PC-3 (cell line): ENCODE measurements at regions of chr2 and their contacts with region 1.

Region 1: DNA sequence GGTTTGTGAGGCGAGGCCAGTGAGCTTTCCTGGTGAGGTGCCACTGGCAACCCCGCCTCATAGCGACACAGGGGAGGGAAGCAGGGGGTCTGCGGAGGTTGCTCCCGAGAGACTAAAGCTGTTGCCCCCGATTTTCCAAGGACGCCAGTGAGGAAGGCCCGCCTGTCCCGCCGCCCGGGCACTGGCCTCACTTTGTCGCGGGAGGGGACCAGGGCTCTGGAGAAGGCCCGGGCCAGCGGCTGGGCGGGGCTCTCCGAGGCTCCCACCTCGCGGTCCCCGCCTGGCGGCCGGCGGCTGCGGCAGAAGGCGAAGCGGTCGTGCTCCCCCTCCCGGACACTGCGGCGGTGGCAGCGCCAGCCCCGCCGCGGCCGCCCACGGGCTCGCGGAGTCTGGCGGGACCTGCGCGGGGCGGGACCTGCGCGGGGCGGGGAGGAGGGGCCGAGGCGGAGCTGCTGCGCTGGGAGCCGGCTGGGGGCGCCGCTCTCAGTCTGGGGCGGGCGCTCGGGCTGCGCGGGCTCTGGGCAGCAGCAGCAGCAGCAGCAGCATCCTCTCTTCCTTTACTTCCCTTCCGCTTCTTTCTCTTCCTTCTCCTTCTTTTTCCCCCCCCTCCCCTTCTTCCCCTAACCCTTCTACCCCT is at the start of gene MAP2:
- DNase-seq: peak; percentile 91
- ATAC-seq: peak; percentile 90
- H3K4me3 ChIP-seq: peak within 1 kb of the TSS; percentile 95
- H3K27ac ChIP-seq: no peak within 1 kb of the TSS
- H3K4me1 ChIP-seq: peaks cover 21% of the 10 kb centered on the region
- H3K27me3 ChIP-seq: no peaks in the 10 kb centered on the region
- CTCF ChIP-seq: peak; percentile 73
- total RNA-seq, gene MAP2: 1.7 and 2.1 TPM in 2 replicates

Region 2: GRCh38 chr2:209334198-209335017 is 89.3 kb before region 1 on chr2:
- CTCF ChIA-PET with region 1: interaction called, 35 read pairs
- POLR2A ChIA-PET with region 1: no interaction called
- intact Hi-C with region 1: loop called (anchors 1 kb)
- DNase-seq: peak; percentile 82
- ATAC-seq: peak; percentile 94
- H3K4me3 ChIP-seq: no peak overlapping the region
- H3K27ac ChIP-seq: no peak overlapping the region
- H3K4me1 ChIP-seq: no peaks in the 10 kb centered on the region
- H3K27me3 ChIP-seq: no peaks in the 10 kb centered on the region
- CTCF ChIP-seq: peak; percentile 93

Region 3: GRCh38 chr2:209380293-209380692 is 43.4 kb before region 1 on chr2:
- CTCF ChIA-PET with region 1: interaction called, 4 read pairs
- POLR2A ChIA-PET with region 1: no interaction called
- intact Hi-C with region 1: loop called (anchors 2 kb)
- DNase-seq: peak; percentile 46
- ATAC-seq: peak; percentile 60
- H3K4me3 ChIP-seq: no peak overlapping the region
- H3K27ac ChIP-seq: no peak overlapping the region
- H3K4me1 ChIP-seq: peaks cover 31% of the 10 kb centered on the region
- H3K27me3 ChIP-seq: no peaks in the 10 kb centered on the region
- CTCF ChIP-seq: no peak

Region 4: GRCh38 chr2:209495855-209496585 is 72.3 kb after region 1 on chr2:
- CTCF ChIA-PET with region 1: interaction called, 3 read pairs
- POLR2A ChIA-PET with region 1: no interaction called
- intact Hi-C with region 1: loop called (anchors 1 kb)
- DNase-seq: peak; percentile 98
- ATAC-seq: peak; percentile 98
- H3K4me3 ChIP-seq: peak overlapping the region; percentile 17; the same call in 1 of the 2 replicates
- H3K27ac ChIP-seq: peak overlapping the region; percentile 66
- H3K4me1 ChIP-seq: peaks cover 26% of the 10 kb centered on the region
- H3K27me3 ChIP-seq: no peaks in the 10 kb centered on the region
- CTCF ChIP-seq: no peak

Region 5: GRCh38 chr2:209556354-209556961 is 132.8 kb after region 1 on chr2:
- CTCF ChIA-PET with region 1: interaction called, 3 read pairs
- POLR2A ChIA-PET with region 1: no interaction called
- intact Hi-C with region 1: loop called (anchors 1 kb)
- DNase-seq: peak; percentile 73
- ATAC-seq: peak; percentile 94
- H3K4me3 ChIP-seq: no peak overlapping the region
- H3K27ac ChIP-seq: no peak overlapping the region
- H3K4me1 ChIP-seq: no peaks in the 10 kb centered on the region
- H3K27me3 ChIP-seq: no peaks in the 10 kb centered on the region
- CTCF ChIP-seq: peak; percentile 80

Region 6: DNA sequence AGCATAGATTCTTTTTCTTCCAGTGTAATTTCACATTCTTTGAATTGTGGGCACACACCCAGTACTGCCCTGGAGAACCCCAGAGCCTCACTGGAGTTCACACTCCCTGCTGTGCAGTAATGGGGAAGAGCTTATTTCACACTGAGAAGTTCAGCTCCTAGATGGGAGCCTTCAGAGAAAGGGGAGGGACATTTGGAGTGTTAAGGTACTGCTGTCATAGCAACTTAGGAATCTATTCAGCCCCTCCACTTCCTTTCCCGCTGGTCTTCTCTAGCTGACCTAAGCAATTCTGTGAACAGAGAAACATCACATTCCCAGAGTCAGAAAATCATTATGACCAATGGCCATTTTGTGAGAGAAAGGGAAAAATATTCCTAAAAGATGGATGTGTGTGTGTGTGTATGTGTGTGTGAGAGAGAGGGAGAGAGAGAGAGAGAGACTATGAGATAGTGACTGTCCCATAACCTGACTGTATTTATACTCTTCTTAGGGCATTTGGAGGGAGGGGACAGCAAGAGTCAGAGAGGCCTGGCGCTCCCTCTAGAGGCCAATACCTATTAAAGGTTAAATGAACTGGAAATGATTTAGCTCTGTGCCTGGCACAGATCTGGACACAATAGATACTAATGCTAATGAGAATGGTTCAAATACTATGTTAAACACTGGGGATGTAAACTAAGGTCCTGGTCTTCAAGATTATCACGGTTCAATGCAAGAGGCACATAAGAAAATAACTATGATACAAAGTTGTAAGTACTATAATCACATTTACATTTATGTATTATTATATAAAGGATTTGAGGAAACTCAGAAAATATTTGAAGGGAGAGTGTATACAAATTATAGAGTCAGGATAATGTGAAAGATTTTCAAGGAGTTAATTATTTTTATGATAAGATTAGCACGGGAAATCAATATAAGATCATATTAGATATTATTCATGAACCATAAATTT is 537.3 kb after region 1 on chr2:
- CTCF ChIA-PET with region 1: interaction called, 6 read pairs
- POLR2A ChIA-PET with region 1: no interaction called
- intact Hi-C with region 1: loop called (anchors 2 kb)
- DNase-seq: peak; percentile 68
- ATAC-seq: peak; percentile 77
- H3K4me3 ChIP-seq: no peak overlapping the region
- H3K27ac ChIP-seq: no peak overlapping the region
- H3K4me1 ChIP-seq: no peaks in the 10 kb centered on the region
- H3K27me3 ChIP-seq: peaks cover 46% of the 10 kb centered on the region
- CTCF ChIP-seq: peak; percentile 87